ENCODE measurements at regions of chr14 and their contacts with region 1.

Region 1: GRCh38 chr14:35826218-35826951 is at the start of gene BRMS1L:
- H3K4me3 Mint-ChIP-seq: peak within 1 kb of the TSS; percentile 90
- H3K27ac Mint-ChIP-seq: peak within 1 kb of the TSS; percentile 93
- H3K4me1 Mint-ChIP-seq: peaks cover 17% of the 10 kb centered on the region
- H3K27me3 Mint-ChIP-seq: peaks cover 7% of the 10 kb centered on the region

Region 2: DNA sequence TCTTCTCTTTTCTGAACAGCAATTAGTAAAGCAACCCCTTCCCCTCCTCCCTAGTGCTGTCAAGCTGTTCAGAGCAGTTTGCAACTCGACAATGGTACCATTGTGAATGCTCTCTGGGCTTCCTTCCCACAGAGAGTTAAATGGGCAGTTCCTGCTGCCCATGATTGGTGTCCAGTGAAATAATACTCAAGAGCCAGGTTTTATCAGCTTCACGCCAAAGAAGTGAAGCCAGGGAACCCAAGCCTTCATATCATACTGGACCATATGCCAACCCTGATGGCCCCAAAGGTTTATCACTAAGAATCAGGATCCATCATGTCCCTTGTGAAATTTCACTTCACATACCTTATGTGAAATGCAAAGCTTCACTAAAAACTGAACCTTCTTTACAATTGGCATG is 267.7 kb before region 1 on chr14:
- intact Hi-C with region 1: no loop called
- H3K4me3 Mint-ChIP-seq: no peak overlapping the region
- H3K27ac Mint-ChIP-seq: no peak overlapping the region
- H3K4me1 Mint-ChIP-seq: no peaks in the 10 kb centered on the region
- H3K27me3 Mint-ChIP-seq: no peaks in the 10 kb centered on the region

Region 3: DNA sequence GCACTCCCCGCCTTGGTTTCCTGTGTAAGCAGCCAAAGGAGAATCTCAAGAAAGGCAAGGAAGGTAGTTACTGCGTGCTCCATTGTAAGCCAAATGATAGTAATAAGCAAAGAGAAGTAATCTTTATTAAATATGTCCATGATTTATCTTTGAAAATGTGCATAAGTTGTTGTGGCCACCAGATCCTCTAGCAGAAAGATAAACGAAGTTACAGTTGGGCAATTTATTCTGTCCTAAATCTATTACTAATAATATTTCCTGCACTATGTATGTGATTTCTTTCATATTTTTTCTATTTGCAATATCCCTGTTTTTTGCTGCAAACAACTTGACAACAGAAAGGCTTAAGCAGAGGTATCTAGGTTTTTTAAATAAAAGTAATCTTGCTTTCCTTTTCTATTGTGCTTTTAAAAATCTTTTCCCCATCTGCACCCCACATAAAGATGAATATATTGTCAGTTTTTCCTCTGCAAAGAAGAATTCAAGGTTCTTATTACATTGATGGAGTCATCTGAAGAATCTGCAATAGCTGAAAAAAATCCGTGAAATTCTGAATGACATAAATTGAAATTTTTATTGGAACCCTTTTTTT is 16.9 kb before region 1 on chr14:
- intact Hi-C with region 1: loop called (anchors 1 kb)
- H3K4me3 Mint-ChIP-seq: peak overlapping the region; percentile 96
- H3K27ac Mint-ChIP-seq: peak overlapping the region; percentile 89
- H3K4me1 Mint-ChIP-seq: peaks cover 18% of the 10 kb centered on the region
- H3K27me3 Mint-ChIP-seq: peaks cover 1% of the 10 kb centered on the region

Region 4: DNA sequence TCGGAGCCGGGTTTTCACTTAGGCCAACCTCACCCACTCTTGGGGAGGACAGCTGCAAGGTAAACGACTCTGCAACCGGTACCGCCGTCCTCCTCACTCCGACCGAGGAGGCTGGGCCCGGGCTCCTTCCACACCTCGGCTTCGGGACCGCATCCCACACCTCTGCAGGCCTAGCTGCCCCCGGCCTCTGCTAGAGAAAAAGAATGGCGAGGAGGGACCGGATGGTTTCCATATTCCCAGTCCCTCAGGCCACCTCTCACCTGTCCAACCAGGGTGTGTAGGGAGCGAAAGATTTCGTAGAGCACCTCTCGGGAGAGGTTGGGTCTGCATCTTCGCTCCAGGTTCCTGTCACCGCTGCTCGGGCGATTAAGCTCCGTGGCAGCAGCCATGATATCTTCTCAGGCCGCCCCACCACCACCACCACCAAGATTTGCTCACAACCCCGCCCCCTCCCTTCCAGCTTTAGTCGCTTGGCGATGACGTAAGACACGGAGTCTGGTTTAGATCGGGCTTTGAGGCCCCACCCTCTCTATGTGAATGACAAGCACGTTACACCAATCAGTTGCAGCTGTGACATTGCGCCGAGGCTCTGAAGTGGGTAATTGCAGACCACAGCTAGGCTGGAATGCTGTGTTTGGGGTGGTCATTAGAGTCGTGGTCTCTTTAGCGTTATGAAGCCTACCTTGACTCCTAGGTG is 494.0 kb after region 1 on chr14 and contains the start of gene MBIP:
- intact Hi-C with region 1: loop called (anchors 5 kb)
- H3K4me3 Mint-ChIP-seq: peak within 1 kb of the TSS; percentile 91
- H3K27ac Mint-ChIP-seq: peak within 1 kb of the TSS; percentile 92
- H3K4me1 Mint-ChIP-seq: peaks cover 14% of the 10 kb centered on the region
- H3K27me3 Mint-ChIP-seq: peaks cover 17% of the 10 kb centered on the region